PC-3 (cell line): ENCODE measurements at regions of chr3 and their contacts with region 1.

Region 1: GRCh38 chr3:156939315-156939714 is 113.2 kb downstream of the LEKR1 start:
- DNase-seq: no peak
- ATAC-seq: no peak
- H3K4me3 ChIP-seq: no peak overlapping the region
- H3K27ac ChIP-seq: no peak overlapping the region
- H3K4me1 ChIP-seq: no peaks in the 10 kb centered on the region
- H3K27me3 ChIP-seq: no peaks in the 10 kb centered on the region
- CTCF ChIP-seq: no peak

Region 2: DNA sequence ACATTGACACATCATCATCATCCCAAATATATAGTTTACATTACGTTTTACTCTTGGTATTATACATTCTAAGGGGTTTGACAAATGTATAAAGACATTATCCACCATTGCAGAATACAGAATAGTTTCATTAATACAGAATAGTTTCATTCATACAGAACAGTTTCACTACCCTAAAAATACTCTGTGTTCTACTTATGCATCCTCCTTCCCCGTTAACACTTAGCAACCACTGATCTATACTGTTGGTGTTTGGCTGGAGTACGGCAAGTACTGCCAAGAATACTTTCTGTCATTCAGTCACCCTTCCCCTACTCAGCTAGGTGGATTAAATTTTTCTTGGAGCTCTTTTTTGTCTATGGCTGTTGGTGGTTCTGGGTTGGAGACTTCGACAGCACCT is 79.7 kb before region 1 on chr3:
- CTCF ChIA-PET with region 1: no interaction called
- POLR2A ChIA-PET with region 1: no interaction called
- intact Hi-C with region 1: no loop called
- DNase-seq: no peak
- ATAC-seq: no peak
- H3K4me3 ChIP-seq: no peak overlapping the region
- H3K27ac ChIP-seq: no peak overlapping the region
- H3K4me1 ChIP-seq: peaks cover 22% of the 10 kb centered on the region
- H3K27me3 ChIP-seq: no peaks in the 10 kb centered on the region
- CTCF ChIP-seq: no peak

Region 3: GRCh38 chr3:156902916-156903315 is 36.4 kb before region 1 on chr3:
- CTCF ChIA-PET with region 1: no interaction called
- POLR2A ChIA-PET with region 1: no interaction called
- intact Hi-C with region 1: no loop called
- DNase-seq: no peak
- ATAC-seq: no peak
- H3K4me3 ChIP-seq: no peak overlapping the region
- H3K27ac ChIP-seq: no peak overlapping the region
- H3K4me1 ChIP-seq: no peaks in the 10 kb centered on the region
- H3K27me3 ChIP-seq: no peaks in the 10 kb centered on the region
- CTCF ChIP-seq: no peak

Region 4: DNA sequence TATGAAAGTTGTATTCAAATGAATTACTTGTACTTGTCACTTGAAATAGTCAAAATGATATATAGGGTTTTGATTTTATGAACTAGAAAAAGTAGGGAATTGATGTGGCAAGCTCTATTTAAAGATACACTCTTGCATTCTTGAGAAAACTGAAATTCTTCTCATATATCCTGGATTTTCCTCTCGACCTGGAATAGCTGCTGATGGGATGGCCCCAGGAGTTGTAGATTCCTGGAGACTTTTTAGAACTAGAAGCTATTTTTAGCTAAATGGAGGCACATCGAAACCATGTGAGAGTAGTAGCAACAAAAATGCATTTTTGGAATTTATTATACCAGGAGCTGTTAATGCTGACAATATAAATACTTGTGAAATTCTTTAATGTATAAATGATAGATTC is 12.7 kb after region 1 on chr3:
- CTCF ChIA-PET with region 1: no interaction called
- POLR2A ChIA-PET with region 1: interaction called, 21 read pairs
- intact Hi-C with region 1: no loop called
- DNase-seq: no peak
- ATAC-seq: no peak
- H3K4me3 ChIP-seq: no peak overlapping the region
- H3K27ac ChIP-seq: no peak overlapping the region
- H3K4me1 ChIP-seq: no peaks in the 10 kb centered on the region
- H3K27me3 ChIP-seq: no peaks in the 10 kb centered on the region
- CTCF ChIP-seq: no peak

Region 5: GRCh38 chr3:157300094-157300493 is 360.8 kb after region 1 on chr3:
- CTCF ChIA-PET with region 1: no interaction called
- POLR2A ChIA-PET with region 1: no interaction called
- intact Hi-C with region 1: no loop called
- DNase-seq: no peak
- ATAC-seq: no peak
- H3K4me3 ChIP-seq: no peak overlapping the region
- H3K27ac ChIP-seq: no peak overlapping the region
- H3K4me1 ChIP-seq: no peaks in the 10 kb centered on the region; the same call in 1 of the 2 replicates
- H3K27me3 ChIP-seq: no peaks in the 10 kb centered on the region
- CTCF ChIP-seq: no peak